ENCODE measurements at regions of chr20 and their contacts with region 1.

Region 1: GRCh38 chr20:34312544-34313217 is 9.5 kb upstream of the AHCY start:
- DNase-seq: peak; percentile 87 to 97
- H3K4me3 ChIP-seq: peak overlapping the region; percentile 1 to 67 (median 51); a peak in 7 of 8 replicates
- H3K27ac ChIP-seq: no peak overlapping the region
- H3K4me1 ChIP-seq: peaks cover 0 to 3% (median 0%) of the 10 kb centered on the region in 4 experiments; a peak in 2 of 7 replicates
- H3K27me3 ChIP-seq: peaks cover 0 to 8% (median 7%) of the 10 kb centered on the region in 4 experiments; a peak in 5 of 7 replicates
- CTCF ChIP-seq: peak; percentile 100
- EP300 ChIP-seq: peak in 1 of 2 experiments; percentile 33; a peak in 1 of 3 replicates
- POLR2A ChIP-seq: no peak
- RAD21 ChIP-seq: peak; percentile 100

Region 2: DNA sequence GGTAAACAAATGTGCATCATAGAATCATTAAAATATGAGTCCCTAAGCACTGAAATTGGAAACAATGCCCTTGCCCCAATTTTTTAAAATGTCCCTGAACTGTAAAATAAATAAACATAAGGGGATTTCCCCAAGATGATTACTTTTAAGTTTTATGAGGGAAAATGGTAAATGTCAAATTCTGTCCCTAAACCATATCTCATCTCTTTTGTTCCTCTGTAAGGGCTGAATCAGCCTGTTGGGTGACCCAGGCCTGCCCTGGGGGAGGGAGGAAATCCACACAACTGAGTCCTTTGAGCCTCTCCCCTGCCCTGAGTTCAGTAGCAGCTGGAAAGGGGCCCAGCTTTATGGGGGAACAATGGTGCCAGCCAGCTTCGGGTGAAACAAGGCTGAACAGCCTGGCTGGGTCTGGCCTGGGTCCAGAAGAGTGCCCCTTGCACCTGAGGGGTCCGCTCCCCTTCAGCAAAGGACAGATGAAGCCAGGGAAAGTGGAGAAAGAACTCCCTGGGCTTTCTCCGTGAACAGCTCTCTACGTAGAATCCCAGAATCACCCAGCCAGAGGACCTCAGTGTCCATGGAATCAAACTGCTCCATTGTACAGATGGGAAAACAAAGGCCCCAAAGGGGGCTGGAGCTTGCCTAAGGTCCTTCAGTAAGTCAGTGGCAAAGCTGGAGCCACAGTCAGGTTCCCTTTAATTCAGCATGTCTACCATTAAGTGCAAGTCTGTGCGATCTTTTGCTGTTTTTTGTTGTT is 22.1 kb after region 1 on chr20:
- CTCF ChIA-PET with region 1: interaction called, 32 read pairs
- POLR2A ChIA-PET with region 1: interaction called, 4 read pairs
- DNase-seq: no peak
- H3K4me3 ChIP-seq: no peak overlapping the region
- H3K27ac ChIP-seq: no peak overlapping the region
- H3K4me1 ChIP-seq: peaks cover 0 to 10% (median 5%) of the 10 kb centered on the region in 4 experiments; a peak in 3 of 7 replicates
- H3K27me3 ChIP-seq: no peaks in the 10 kb centered on the region
- CTCF ChIP-seq: no peak
- EP300 ChIP-seq: no peak
- POLR2A ChIP-seq: no peak
- RAD21 ChIP-seq: no peak

Region 3: GRCh38 chr20:34403908-34404307 is 91.2 kb after region 1 on chr20:
- CTCF ChIA-PET with region 1: interaction called, 17 read pairs
- POLR2A ChIA-PET with region 1: interaction called, 3 read pairs
- DNase-seq: no peak
- H3K4me3 ChIP-seq: no peak overlapping the region
- H3K27ac ChIP-seq: no peak overlapping the region
- H3K4me1 ChIP-seq: peaks cover 0 to 4% (median 0%) of the 10 kb centered on the region in 4 experiments; a peak in 1 of 7 replicates
- H3K27me3 ChIP-seq: no peaks in the 10 kb centered on the region
- CTCF ChIP-seq: no peak
- EP300 ChIP-seq: no peak
- POLR2A ChIP-seq: no peak
- RAD21 ChIP-seq: no peak

Region 4: DNA sequence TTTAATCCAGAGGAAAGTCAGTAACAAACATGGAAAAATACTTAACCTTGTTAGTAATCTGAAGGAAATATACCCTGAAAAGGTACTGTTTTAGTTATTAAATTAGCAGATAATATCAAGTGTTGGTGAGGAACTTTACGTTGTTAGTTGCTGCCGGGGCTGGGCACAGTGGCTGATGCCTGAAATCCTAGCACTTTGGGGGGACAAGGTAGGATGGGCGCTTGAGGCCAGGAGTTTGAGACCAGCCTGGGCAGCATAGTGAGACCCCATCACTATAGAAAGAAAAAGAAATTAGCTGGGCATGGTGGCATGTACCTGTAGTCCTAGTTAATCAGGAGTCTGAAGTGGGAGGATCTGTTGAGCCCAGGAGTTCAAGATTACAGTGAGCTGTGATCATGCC is 130.9 kb after region 1 on chr20:
- CTCF ChIA-PET with region 1: interaction called, 32 read pairs
- POLR2A ChIA-PET with region 1: no interaction called
- DNase-seq: no peak
- H3K4me3 ChIP-seq: no peak overlapping the region
- H3K27ac ChIP-seq: no peak overlapping the region
- H3K4me1 ChIP-seq: no peaks in the 10 kb centered on the region
- H3K27me3 ChIP-seq: no peaks in the 10 kb centered on the region
- CTCF ChIP-seq: no peak
- EP300 ChIP-seq: no peak
- POLR2A ChIP-seq: no peak
- RAD21 ChIP-seq: no peak

Region 5: DNA sequence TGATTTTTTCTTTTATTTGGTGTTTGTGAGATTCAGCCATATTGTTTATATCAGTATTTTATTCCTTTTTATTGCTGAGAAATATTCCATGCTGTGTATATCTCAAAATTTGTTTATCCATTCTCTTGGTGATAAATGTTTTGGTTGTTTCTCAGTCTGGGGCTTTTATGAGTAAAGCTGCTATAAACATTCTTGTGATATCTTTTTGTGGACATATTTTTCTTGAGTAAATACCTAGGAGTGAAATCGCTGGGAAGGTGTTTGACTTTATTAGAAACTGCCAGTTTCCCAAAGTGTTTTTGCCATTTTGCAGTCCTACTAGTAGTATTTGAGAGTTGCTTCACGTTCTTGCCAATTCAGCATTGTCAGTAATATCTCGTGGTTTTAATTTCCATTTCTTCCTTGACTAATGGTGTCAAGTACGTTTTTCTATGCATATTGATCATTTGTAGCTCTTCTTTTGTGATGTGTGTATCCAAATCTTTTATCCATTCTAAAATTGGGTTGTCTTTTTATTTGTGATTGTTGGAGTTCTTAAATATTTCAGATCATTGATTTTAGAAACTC is 172.5 kb after region 1 on chr20:
- CTCF ChIA-PET with region 1: interaction called, 11 read pairs
- POLR2A ChIA-PET with region 1: no interaction called
- DNase-seq: no peak
- H3K4me3 ChIP-seq: no peak overlapping the region
- H3K27ac ChIP-seq: no peak overlapping the region
- H3K4me1 ChIP-seq: no peaks in the 10 kb centered on the region
- H3K27me3 ChIP-seq: no peaks in the 10 kb centered on the region
- CTCF ChIP-seq: no peak
- EP300 ChIP-seq: no peak
- POLR2A ChIP-seq: no peak
- RAD21 ChIP-seq: no peak